AG04449 (cell line): ENCODE measurements at regions of chr2 and their contacts with region 1.

Region 1: DNA sequence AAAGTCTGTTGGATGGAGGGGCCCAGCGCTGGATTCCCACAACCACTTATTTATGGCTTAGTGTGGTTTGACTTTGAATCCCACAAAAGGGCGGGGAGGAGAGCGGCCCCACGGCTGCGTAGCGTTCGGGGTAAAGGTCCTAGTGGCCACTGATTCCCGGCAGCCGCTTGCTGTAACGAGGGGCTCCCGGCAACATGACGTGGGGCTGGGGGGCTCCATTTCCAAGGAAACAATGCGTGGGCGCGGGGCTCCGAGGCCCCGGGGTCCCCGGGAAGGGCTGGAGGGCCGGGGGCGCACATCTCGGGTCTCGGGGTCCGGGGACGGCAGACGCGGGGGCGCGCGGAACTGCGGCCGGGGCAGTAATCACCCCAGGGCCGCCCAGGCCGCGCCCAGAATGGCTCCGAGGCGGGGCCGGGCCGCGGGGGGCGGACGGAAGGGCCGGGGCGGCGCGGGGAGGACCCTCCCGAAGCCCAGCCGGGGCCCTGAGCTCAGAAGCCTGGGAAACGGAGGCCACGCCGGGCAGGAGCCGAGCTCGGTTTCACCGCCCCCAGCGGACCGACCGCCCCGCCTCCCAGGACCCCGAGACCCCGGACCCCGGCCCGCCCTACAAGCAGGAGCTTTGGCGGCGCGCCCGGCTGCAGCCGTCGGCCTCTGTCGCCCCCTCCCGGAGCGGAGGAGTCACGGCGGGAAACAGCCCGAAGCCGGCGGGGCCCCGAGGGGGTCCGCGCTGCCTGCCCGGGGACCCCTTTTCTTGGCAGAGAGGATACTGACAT is 11.9 kb upstream of the MLPH start:
- DNase-seq: no peak
- H3K4me3 ChIP-seq: peak overlapping the region; percentile 56
- CTCF ChIP-seq: peak; percentile 93

Region 2: DNA sequence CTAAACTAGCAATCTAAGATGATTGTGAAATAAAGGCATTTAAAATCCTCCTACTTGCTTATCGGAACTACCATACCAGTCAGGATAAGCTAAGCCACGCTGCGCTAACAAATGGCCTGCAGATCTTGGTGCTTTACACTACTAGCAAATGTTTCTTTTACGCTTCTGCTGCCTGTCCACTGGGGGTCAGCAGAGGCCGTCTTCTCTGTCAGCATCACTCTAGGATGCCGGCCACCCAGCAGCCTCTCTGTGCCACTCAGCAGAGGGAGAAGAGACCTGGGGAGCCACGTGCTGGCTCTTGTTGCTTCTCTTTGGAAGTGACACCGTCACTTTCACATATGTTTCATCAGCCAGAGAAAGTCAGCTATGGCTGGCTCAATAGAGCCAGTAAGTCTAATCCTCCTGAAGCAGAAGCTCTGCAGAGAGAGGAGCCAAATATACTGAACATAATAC is 352.9 kb before region 1 on chr2:
- CTCF ChIA-PET with region 1: interaction called, 17 read pairs
- POLR2A ChIA-PET with region 1: no interaction called
- DNase-seq: no peak
- H3K4me3 ChIP-seq: no peak overlapping the region
- CTCF ChIP-seq: peak; percentile 63

Region 3: DNA sequence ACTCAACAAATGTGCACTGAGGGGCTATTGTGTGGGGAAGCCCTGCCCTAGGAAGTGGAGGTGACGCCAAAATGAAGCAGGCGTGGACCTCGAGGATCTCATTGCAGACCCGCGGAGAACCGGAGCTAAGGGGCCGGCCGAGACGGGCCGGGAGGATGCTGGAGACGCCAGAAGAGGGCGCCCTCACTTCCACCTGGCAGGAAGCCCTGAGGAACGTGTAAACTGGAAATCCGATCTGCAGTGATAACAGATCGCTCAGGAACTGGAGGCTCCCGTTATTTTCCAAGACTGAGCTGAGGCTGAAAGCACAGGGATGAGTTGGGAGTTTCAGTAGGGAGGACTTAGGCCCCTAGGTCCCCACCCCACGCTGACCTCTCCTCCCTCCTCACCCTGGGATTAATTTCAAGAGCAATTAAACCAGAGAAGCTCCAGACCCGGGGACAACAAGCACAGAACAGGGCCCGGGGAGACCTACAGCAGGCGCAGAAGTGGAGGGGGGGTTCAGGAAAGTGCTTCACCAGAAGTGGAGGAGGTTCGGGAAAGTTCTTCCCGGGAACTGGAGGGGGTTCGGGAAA is 53.5 kb before region 1 on chr2:
- CTCF ChIA-PET with region 1: interaction called, 111 read pairs
- POLR2A ChIA-PET with region 1: interaction called, 6 read pairs
- DNase-seq: no peak
- H3K4me3 ChIP-seq: no peak overlapping the region
- CTCF ChIP-seq: peak; percentile 91

Region 4: DNA sequence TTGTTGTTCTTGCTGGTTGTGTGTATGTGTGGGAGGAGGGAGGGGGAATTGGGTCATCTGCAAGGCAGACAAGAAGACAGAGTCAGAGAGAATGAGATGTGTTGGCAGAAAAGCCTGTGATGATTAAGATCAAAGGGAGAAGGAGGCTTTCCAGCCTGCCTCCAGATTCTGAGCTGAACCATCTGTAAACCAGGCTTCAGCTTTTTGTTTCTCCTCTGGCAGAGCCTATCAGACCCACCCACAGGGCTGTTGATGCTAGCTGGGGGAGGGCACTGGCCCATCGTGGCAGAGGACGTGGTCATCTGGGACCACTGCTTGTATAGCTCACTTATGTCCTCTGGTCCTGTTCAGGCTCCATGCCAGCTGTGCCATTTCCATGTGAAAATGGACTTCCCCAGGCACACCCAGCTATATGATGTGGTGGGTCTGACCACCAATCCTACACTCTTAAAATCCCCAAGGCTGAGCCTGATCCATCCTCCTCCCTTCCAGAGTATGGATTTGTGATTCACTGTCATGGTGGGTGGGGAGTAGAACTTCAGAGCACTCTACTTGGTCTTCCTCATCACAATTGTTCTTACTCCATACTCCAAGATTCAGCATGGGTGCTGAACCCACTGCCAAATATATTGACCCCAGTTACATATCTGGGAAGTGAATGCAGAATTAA is 33.4 kb before region 1 on chr2:
- CTCF ChIA-PET with region 1: interaction called, 29 read pairs
- POLR2A ChIA-PET with region 1: no interaction called
- DNase-seq: peak; percentile 38
- H3K4me3 ChIP-seq: no peak overlapping the region
- CTCF ChIP-seq: no peak

Region 5: GRCh38 chr2:237492496-237492890 is 17.4 kb after region 1 on chr2:
- CTCF ChIA-PET with region 1: interaction called, 82 read pairs
- POLR2A ChIA-PET with region 1: no interaction called
- DNase-seq: no peak
- H3K4me3 ChIP-seq: no peak overlapping the region
- CTCF ChIP-seq: no peak